ENCODE measurements at regions of chr12 and their contacts with region 1.

Region 1: DNA sequence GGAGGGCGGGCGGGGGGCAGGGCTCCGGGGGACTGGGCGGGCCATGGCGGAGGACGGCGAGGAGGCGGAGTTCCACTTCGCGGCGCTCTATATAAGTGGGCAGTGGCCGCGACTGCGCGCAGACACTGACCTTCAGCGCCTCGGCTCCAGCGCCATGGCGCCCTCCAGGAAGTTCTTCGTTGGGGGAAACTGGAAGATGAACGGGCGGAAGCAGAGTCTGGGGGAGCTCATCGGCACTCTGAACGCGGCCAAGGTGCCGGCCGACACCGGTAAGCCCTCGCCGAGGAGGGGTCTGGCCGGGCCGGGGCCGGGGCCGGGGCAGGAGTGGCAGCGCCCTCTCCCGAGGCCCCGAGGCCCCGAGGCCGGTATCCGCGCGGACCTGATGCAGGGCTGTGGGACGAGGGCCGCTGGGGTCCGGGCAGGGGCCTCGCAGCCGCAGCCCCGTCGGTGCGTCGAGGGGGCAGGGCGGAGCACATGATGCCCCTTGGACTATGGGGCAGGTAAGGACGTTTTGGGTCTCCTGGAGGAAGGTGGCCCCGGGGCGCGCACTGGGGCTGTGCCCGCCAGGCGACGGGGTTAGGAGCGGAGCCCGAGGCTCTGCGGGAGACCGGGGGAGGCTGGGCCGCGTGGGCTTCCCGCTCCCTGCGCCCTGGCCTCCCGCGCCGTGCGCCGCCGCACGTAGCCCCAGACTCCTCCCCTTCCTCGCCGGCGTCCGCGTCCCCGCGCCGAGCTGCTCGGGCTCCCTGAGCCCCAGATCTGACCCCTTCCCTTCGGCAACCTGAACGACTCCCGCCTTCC is at the start of gene TPI1:
- DNase-seq: peak; percentile 78
- H3K4me3 Mint-ChIP-seq: peak within 1 kb of the TSS; percentile 88
- H3K27ac Mint-ChIP-seq: peak within 1 kb of the TSS; percentile 91
- H3K4me1 Mint-ChIP-seq: peaks cover 43% of the 10 kb centered on the region
- H3K27me3 Mint-ChIP-seq: no peaks in the 10 kb centered on the region
- CTCF ChIP-seq: no peak
- total RNA-seq, gene TPI1: 608 and 639 TPM in 2 replicates

Region 2: GRCh38 chr12:6312529-6313325 is 554.9 kb before region 1 on chr12:
- CTCF ChIA-PET with region 1: no interaction called
- intact Hi-C with region 1: no loop called
- DNase-seq: peak; percentile 76
- H3K4me3 Mint-ChIP-seq: peak overlapping the region; percentile 48
- H3K27ac Mint-ChIP-seq: peak overlapping the region; percentile 60
- H3K4me1 Mint-ChIP-seq: peaks cover 22% of the 10 kb centered on the region
- H3K27me3 Mint-ChIP-seq: no peaks in the 10 kb centered on the region
- CTCF ChIP-seq: no peak

Region 3: GRCh38 chr12:6851921-6852650 is 15.5 kb before region 1 on chr12 and contains the start of gene USP5:
- CTCF ChIA-PET with region 1: interaction called, 15 read pairs
- intact Hi-C with region 1: no loop called
- DNase-seq: peak; percentile 97
- H3K4me3 Mint-ChIP-seq: peak within 1 kb of the TSS; percentile 94
- H3K27ac Mint-ChIP-seq: peak within 1 kb of the TSS; percentile 89
- H3K4me1 Mint-ChIP-seq: peaks cover 27% of the 10 kb centered on the region
- H3K27me3 Mint-ChIP-seq: no peaks in the 10 kb centered on the region
- CTCF ChIP-seq: no peak
- total RNA-seq, gene USP5: 126 and 128 TPM in 2 replicates

Region 4: DNA sequence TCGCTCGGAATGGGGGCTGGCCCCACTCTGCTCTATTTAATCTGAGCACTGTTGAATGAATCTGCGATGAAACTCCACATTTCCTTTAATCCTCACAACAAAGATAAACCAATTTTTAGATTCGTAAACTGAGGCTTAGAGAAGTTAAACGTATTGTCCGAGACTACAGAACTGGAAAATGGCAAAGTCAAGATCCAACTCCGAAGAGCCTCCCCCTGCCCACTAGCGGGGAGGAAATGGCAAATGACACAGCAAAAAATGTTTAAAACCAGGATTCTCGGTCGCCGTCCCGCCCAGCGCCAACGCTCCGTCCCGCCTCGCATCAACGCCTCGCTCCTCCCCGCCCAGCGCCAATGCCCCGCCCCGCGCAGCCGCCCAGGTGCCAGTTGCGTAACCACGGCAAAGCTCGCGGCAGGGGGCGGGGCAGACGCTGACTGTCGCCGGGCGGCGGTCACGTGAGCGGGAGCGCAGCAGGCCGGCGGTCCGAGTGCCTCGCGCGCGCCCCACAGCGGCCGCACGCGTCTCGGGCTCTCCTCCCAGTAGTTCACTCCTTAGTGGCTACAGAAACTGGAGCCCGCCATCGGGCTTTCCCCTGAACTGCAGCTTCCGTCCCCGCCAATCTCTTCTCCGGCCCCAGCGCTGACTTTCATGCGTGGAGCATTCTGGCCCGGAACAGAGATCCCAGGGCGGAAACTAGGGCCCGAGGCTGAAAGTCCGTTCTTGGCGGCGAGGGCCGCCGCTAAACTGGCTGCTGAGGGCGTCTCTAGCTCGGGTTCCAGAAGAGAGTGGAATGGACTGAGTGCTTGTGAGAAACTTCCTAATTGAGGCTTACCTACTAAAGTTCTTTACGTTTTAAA is 23.4 kb after region 1 on chr12:
- CTCF ChIA-PET with region 1: interaction called, 31 read pairs
- intact Hi-C with region 1: loop called (anchors 1 kb)
- DNase-seq: peak; percentile 99
- H3K4me3 Mint-ChIP-seq: peak overlapping the region; percentile 70
- H3K27ac Mint-ChIP-seq: peak overlapping the region; percentile 81
- H3K4me1 Mint-ChIP-seq: peaks cover 15% of the 10 kb centered on the region
- H3K27me3 Mint-ChIP-seq: no peaks in the 10 kb centered on the region
- CTCF ChIP-seq: peak; percentile 77

Region 5: GRCh38 chr12:6927379-6928024 is 59.9 kb after region 1 on chr12 and contains the start of gene ATN1:
- CTCF ChIA-PET with region 1: interaction called, 24 read pairs
- intact Hi-C with region 1: loop called (anchors 5 kb)
- DNase-seq: peak; percentile 71
- H3K4me3 Mint-ChIP-seq: peak within 1 kb of the TSS; percentile 83
- H3K27ac Mint-ChIP-seq: peak within 1 kb of the TSS; percentile 68
- H3K4me1 Mint-ChIP-seq: peaks cover 67% of the 10 kb centered on the region
- H3K27me3 Mint-ChIP-seq: no peaks in the 10 kb centered on the region
- CTCF ChIP-seq: no peak
- total RNA-seq, gene ATN1: 59.9 and 62.0 TPM in 2 replicates

Region 6: GRCh38 chr12:6937481-6938297 is 70.1 kb after region 1 on chr12:
- CTCF ChIA-PET with region 1: interaction called, 13 read pairs
- intact Hi-C with region 1: loop called (anchors 5 kb)
- DNase-seq: peak; percentile 93
- H3K4me3 Mint-ChIP-seq: peak overlapping the region; percentile 75
- H3K27ac Mint-ChIP-seq: peak overlapping the region; percentile 93
- H3K4me1 Mint-ChIP-seq: peaks cover 34% of the 10 kb centered on the region
- H3K27me3 Mint-ChIP-seq: no peaks in the 10 kb centered on the region
- CTCF ChIP-seq: peak; percentile 89

Region 7: GRCh38 chr12:6944381-6945186 is 77.0 kb after region 1 on chr12:
- CTCF ChIA-PET with region 1: interaction called, 13 read pairs
- intact Hi-C with region 1: loop called (anchors 5 kb)
- DNase-seq: peak; percentile 93
- H3K4me3 Mint-ChIP-seq: peak overlapping the region; percentile 87
- H3K27ac Mint-ChIP-seq: peak overlapping the region; percentile 100
- H3K4me1 Mint-ChIP-seq: peaks cover 49% of the 10 kb centered on the region
- H3K27me3 Mint-ChIP-seq: peaks cover 13% of the 10 kb centered on the region
- CTCF ChIP-seq: peak; percentile 62

Region 8: DNA sequence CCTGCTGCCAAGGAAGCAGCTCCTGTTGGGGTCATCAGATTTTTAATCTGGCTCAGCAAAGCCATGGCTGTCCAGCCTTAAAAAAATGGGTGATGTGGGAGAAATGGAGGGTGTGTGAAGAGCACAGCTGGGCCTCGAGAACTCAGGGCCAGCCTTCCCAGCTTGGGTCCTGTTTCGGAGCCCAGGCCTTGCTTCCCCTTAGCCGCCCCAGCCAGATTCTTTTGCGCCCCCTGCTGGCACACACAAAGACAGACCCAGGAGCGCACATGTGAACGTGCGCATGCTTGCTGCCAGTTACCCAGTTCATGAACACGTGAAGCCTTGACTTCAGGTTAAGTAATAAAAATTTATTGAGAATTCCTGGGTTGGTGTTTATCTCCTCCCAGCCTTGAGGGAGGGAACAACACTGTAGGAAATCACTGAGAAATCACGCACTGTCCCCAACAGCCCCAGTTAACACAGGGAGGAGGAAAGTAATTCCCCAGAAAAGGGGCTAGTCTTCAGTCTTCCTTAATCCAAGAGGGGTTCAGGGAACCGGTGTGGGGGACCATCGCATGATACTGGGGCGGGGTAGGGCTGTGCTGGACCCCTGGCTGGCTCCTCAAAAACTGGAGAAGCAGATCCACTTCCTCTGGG is 97.5 kb after region 1 on chr12:
- CTCF ChIA-PET with region 1: interaction called, 17 read pairs
- intact Hi-C with region 1: no loop called
- DNase-seq: peak; percentile 89
- H3K4me3 Mint-ChIP-seq: peak overlapping the region; percentile 79
- H3K27ac Mint-ChIP-seq: peak overlapping the region; percentile 87
- H3K4me1 Mint-ChIP-seq: peaks cover 50% of the 10 kb centered on the region
- H3K27me3 Mint-ChIP-seq: no peaks in the 10 kb centered on the region
- CTCF ChIP-seq: peak; percentile 90

Measured in Calu3 (cell line).